ENCODE measurements at regions of chr15 and their contacts with region 1.

Region 1: GRCh38 chr15:79872358-79873017 is 24.3 kb downstream of the MTHFS start:
- DNase-seq: peak; percentile 64
- H3K4me3 Mint-ChIP-seq: peak overlapping the region; percentile 45
- H3K27ac Mint-ChIP-seq: peak overlapping the region; percentile 89
- H3K4me1 Mint-ChIP-seq: peaks cover 57% of the 10 kb centered on the region
- H3K27me3 Mint-ChIP-seq: no peaks in the 10 kb centered on the region
- CTCF ChIP-seq: no peak

Region 2: DNA sequence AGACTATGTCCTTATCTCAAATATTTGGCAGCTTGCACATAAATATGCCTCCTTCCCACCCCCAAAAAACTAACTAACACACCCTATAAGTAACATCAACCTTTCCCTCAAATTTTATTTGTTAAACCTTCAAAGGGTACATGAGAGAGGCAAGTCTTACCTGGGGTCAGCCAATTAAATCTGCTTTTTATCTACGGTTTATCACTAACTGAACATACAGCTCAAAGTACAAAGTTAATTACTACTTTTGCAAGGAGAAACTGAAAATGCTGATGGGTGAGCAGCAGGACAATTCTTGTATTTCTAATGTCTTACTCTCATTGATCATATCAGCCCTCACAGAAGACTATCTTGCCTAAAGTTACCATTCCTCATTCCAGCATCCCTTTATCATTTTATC is 10.3 kb before region 1 on chr15:
- CTCF ChIA-PET with region 1: no interaction called
- intact Hi-C with region 1: no loop called
- DNase-seq: no peak
- H3K4me3 Mint-ChIP-seq: no peak overlapping the region
- H3K27ac Mint-ChIP-seq: no peak overlapping the region
- H3K4me1 Mint-ChIP-seq: peaks cover 22% of the 10 kb centered on the region
- H3K27me3 Mint-ChIP-seq: no peaks in the 10 kb centered on the region
- CTCF ChIP-seq: no peak

Region 3: GRCh38 chr15:79896637-79897379 is 24.3 kb after region 1 on chr15 and contains the start of gene MTHFS:
- CTCF ChIA-PET with region 1: interaction called, 18 read pairs
- intact Hi-C with region 1: loop called (anchors 1 kb)
- DNase-seq: peak; percentile 89
- H3K4me3 Mint-ChIP-seq: peak within 1 kb of the TSS; percentile 98
- H3K27ac Mint-ChIP-seq: peak within 1 kb of the TSS; percentile 99
- H3K4me1 Mint-ChIP-seq: peaks cover 23% of the 10 kb centered on the region
- H3K27me3 Mint-ChIP-seq: no peaks in the 10 kb centered on the region
- CTCF ChIP-seq: peak; percentile 57
- total RNA-seq, gene MTHFS: 66.7 and 68.0 TPM in 2 replicates

Region 4: DNA sequence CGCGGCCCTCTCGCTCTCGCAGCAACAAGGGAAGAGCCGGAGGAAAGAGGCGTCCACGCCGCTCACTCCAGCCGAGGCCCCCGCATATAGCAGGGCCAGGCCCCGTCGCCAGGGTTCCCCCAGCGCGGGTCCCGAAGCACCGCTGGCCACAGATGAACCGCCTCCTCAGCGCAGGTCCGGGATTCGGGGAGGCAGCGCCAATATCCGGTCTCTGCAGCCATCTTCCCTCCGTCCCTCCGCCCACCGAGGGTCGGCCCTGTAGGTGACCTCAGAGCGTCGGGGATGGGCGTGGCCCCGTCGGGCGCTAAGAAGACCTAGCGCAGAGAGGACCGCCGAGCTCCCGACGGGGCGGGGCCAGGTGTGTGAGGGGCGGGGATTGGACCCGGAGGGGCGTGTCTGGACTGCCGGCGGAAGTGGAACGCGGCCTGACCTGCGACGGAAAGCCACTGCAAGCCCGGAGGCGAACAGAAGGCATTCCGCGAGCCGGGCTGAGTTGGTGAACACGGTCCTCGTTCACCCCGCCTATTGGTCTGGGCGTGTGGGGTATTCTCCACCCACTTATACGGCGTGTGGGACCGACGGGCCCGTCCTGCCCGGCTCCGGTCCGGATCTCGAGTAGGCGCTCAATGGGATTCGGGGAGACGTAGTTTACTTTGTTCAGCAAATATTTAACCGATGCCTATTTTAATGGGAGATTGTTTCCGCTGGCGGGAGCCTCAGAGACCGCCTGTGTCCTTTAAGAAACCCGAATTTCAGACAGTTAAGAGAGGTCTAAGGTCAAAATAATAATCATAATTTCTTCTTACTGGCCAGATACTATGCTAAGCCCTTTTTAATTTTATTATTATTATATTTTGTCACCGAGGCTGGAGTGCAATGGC is 51.3 kb after region 1 on chr15:
- CTCF ChIA-PET with region 1: no interaction called
- intact Hi-C with region 1: loop called (anchors 2 kb)
- DNase-seq: peak; percentile 100
- H3K4me3 Mint-ChIP-seq: peak overlapping the region; percentile 100
- H3K27ac Mint-ChIP-seq: peak overlapping the region; percentile 96
- H3K4me1 Mint-ChIP-seq: peaks cover 10% of the 10 kb centered on the region
- H3K27me3 Mint-ChIP-seq: peaks cover 2% of the 10 kb centered on the region
- CTCF ChIP-seq: no peak

Region 5: DNA sequence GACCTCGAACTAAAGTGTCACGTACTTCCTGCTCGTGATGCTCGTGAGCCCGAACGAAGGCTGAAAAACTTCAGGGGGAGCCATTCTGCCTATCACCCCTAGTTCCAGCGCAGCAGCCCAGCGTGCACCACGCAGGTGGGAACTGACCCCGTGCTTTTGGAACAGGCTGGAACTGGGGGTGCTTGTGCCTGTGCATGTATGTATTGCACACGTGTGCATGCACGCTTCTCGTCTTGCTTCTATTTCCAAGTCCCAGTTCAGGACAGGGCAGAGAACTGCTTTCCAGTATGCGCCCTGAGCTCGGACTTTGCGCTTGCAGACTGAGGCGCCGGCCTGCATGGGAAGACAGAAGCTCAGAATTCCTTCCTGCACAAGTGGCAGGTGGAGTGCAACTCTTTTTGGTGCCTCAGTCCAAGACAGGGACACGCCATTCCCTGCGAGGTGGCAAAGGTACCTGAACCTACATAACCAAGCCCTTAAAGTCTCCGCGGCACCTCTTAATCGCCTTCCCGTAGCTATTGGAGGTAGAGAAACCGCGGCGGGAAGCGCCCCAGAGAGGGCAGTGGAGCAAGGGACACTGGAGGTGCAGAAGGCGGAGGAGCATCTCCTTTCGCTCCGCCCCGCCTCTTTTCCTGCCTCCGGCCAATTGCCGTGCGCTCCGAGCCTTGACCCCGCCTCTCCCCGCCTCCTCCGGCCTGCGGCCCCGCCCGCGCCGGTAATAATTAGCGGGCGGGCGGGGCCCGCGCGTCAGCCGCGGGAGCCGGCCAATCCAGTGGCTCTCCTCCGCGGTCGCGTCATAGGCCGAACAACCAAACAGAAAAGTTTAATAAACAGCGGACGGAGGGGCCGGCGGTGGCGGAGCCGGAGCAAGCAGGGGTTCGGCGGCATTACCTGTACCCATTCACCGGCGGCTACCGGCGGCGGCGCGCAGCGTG is 186.6 kb after region 1 on chr15 and contains the start of gene ZFAND6:
- CTCF ChIA-PET with region 1: no interaction called
- intact Hi-C with region 1: loop called (anchors 1 kb)
- DNase-seq: peak; percentile 98
- H3K4me3 Mint-ChIP-seq: peak within 1 kb of the TSS; percentile 92
- H3K27ac Mint-ChIP-seq: peak within 1 kb of the TSS; percentile 85
- H3K4me1 Mint-ChIP-seq: peaks cover 13% of the 10 kb centered on the region
- H3K27me3 Mint-ChIP-seq: no peaks in the 10 kb centered on the region
- CTCF ChIP-seq: no peak
- total RNA-seq, gene ZFAND6: 87.5 and 88.6 TPM in 2 replicates

Measured in Calu3 (cell line).